ENCODE measurements at regions of chr12 and their contacts with region 1.

Region 1: DNA sequence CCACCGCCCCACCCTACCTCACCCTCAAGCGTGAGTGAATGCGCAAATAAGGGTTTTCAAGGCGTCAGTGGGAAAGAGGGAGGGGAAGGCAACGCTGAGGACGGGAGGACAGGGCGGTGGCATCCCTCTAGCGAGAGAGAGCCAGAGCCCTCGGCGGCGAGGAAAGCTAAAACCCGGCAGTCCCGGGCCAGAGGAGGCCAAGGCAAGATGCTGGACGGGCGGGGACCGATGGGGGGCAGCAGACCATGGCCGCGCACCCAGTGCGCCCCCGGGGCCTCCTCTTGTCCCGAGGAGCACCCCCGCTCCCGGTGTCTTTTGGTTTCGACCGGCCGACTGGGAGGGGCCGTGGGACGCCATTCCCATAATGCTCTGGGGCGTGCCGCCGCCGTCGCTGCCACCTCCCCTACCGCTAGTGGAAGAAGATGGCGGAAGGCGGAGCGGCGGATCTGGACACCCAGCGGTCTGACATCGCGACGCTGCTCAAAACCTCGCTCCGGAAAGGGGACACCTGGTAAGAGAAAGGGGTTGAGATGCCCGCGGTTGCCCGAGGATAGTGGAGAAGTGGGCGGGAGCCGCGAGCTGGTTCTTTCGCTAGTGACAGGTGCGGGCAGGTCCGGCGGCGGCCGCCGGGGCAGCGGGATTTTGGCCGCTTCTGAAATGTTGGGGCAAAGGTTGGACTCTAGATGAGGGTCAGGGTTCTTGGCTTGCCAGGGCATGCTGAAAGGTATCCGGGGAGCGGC is at the start of gene USP15:
- DNase-seq: peak; percentile 96
- H3K4me3 Mint-ChIP-seq: peak within 1 kb of the TSS; percentile 95
- H3K27ac Mint-ChIP-seq: peak within 1 kb of the TSS; percentile 100
- H3K4me1 Mint-ChIP-seq: peaks cover 49% of the 10 kb centered on the region
- H3K27me3 Mint-ChIP-seq: no peaks in the 10 kb centered on the region
- total RNA-seq, gene USP15: 134 to 161 TPM

Region 2: DNA sequence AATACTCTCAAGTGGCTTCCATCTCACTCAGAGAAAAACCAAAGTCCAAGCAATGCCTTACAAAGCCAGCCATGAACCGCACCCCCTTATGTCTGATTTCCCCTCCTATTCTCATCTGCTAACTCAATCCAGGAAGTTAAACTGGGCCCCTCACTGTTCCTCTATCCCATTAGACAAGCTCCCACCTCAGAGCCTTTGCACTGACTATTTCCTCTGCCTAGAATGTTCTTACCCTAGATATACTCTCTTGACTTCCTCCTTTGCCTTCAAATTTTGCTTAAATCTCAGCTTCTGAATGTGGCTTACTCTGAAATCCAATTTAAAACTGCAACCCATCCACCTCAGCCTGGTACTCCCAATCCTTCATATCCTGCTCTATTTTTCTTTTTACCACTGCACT is 256.9 kb before region 1 on chr12:
- CTCF ChIA-PET with region 1: no interaction called
- POLR2A ChIA-PET with region 1: no interaction called
- DNase-seq: no peak
- H3K4me3 Mint-ChIP-seq: no peak overlapping the region
- H3K27ac Mint-ChIP-seq: no peak overlapping the region
- H3K4me1 Mint-ChIP-seq: no peaks in the 10 kb centered on the region
- H3K27me3 Mint-ChIP-seq: no peaks in the 10 kb centered on the region

Region 3: GRCh38 chr12:62014330-62014729 is 245.8 kb before region 1 on chr12:
- CTCF ChIA-PET with region 1: no interaction called
- POLR2A ChIA-PET with region 1: no interaction called
- DNase-seq: no peak
- H3K4me3 Mint-ChIP-seq: no peak overlapping the region
- H3K27ac Mint-ChIP-seq: no peak overlapping the region
- H3K4me1 Mint-ChIP-seq: no peaks in the 10 kb centered on the region
- H3K27me3 Mint-ChIP-seq: peaks cover 5% of the 10 kb centered on the region

Region 4: DNA sequence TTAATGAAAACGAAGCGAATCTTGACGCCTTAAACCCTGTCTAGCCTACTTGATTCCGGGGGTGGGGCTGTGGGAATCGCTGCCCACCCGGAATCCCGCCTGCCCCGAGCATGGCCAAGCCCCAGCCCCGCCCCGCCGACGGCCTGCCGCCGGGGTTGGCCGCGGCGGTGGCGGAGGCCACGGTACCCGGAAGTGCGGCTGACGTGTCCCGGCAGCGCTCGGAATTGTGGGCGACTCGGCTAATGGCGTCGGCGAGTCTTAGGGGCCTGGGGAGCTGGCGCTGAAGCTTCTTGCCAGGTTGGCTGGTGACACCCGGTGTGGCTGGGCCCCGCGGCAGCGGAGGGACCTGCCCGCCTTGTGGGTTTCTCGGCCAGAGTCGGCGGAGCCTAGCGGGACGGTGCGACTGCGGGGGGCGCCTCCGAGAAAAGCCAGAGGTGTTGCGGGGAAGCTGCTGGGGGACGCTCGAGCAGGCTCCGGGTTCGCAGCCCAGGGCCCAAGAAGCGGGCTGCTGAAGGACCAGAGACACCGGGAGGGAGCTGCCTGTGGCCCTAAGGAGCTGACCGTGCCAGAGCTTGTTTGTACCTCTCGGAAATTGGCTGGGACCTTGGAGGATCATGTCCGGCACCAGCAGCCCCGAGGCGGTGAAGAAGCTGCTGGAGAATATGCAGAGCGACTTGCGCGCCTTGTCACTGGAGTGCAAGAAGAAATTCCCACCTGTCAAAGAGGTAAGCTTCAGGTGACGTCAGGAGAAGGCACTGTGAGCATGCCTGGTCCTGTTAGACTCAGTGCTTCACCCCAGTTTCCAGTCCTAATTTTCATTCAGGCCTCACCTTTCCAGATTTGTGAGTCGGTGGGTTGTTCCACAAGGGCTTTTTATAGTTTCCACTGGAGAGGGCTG is 206.7 kb after region 1 on chr12 and contains the start of gene MON2:
- CTCF ChIA-PET with region 1: no interaction called
- POLR2A ChIA-PET with region 1: interaction called, 11 read pairs
- DNase-seq: peak; percentile 87
- H3K4me3 Mint-ChIP-seq: peak within 1 kb of the TSS; percentile 88
- H3K27ac Mint-ChIP-seq: peak within 1 kb of the TSS; percentile 88
- H3K4me1 Mint-ChIP-seq: peaks cover 25% of the 10 kb centered on the region
- H3K27me3 Mint-ChIP-seq: peaks cover 3% of the 10 kb centered on the region
- total RNA-seq, gene MON2: 42.0 to 45.0 TPM

Region 5: GRCh38 chr12:62647586-62647985 is 387.4 kb after region 1 on chr12:
- CTCF ChIA-PET with region 1: no interaction called
- POLR2A ChIA-PET with region 1: no interaction called
- DNase-seq: no peak
- H3K4me3 Mint-ChIP-seq: no peak overlapping the region
- H3K27ac Mint-ChIP-seq: no peak overlapping the region
- H3K4me1 Mint-ChIP-seq: no peaks in the 10 kb centered on the region
- H3K27me3 Mint-ChIP-seq: no peaks in the 10 kb centered on the region

Measured in activated CD4-positive, alpha-beta memory T cell treated with anti-CD3 and anti-CD28 coated beads, Interleukin-2, amount 10 ng/mL, durations not matched to agents 7 days and 5 days (primary cell).